ENCODE measurements at regions of chr2 and their contacts with region 1.

Region 1: GRCh38 chr2:85504778-85505323 is 34.1 kb upstream of the MAT2A start:
- DNase-seq: peak in 1 of 2 donors; percentile 40
- ATAC-seq: peak; percentile 35 to 89 (median 64)
- H3K4me3 ChIP-seq: no peak overlapping the region
- H3K27ac ChIP-seq: peak overlapping the region in 6 of 10 donors; percentile 36 to 74 (median 62)
- H3K4me1 ChIP-seq: peaks cover 0 to 71% (median 41%) of the 10 kb centered on the region in 9 donors
- H3K27me3 ChIP-seq: no peaks in the 10 kb centered on the region
- CTCF ChIP-seq: no peak

Region 2: DNA sequence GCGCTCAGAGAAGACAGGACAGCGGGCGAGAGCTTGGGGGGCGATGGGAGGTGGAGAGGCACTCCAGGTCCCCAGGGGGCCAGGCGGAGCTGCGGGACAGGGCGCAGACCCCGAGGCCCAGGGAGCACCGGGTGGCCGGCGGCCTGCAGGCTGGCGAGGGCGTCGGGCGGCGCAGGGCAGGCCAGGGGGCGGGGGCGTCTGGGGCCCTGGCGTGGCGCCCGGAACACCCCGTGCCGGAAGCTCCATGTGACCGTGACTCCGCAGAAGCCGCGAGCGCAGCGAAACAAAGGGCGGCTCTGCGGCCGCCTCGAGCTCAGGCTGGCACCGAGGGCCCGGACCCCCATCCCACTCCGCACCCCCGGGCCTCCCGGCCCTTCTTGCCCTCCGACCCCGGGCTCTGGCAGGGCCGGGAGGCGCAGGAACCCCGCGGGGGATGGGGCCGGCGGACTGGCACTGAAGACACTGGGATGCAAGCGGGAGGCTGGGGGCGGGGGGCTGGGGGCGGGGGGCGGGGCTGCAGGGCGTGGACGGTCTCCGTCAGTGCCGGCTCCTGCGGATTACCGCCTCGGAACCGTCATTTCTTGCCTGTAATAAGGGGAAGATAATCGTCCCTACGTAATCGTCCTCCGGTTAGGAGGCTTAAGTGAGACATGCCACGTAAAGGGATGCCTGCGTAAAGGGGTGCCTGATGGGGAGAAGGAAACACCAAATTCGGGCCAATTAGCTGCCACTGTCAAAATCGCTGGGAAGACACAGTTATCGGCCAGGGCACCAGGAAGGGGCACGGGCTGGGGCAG is 67.2 kb before region 1 on chr2:
- intact Hi-C with region 1: loop called in 2 of 10 experiments (anchors 5 kb)
- DNase-seq: peak; percentile 87 to 92
- ATAC-seq: peak; percentile 79 to 89 (median 81)
- H3K4me3 ChIP-seq: peak overlapping the region in 9 of 10 donors; percentile 32 to 59 (median 55)
- H3K27ac ChIP-seq: peak overlapping the region; percentile 73 to 98 (median 94)
- H3K4me1 ChIP-seq: peaks cover 19 to 69% (median 46%) of the 10 kb centered on the region in 9 donors
- H3K27me3 ChIP-seq: no peaks in the 10 kb centered on the region
- CTCF ChIP-seq: no peak